ENCODE measurements at regions of chr10 and their contacts with region 1.

Region 1: DNA sequence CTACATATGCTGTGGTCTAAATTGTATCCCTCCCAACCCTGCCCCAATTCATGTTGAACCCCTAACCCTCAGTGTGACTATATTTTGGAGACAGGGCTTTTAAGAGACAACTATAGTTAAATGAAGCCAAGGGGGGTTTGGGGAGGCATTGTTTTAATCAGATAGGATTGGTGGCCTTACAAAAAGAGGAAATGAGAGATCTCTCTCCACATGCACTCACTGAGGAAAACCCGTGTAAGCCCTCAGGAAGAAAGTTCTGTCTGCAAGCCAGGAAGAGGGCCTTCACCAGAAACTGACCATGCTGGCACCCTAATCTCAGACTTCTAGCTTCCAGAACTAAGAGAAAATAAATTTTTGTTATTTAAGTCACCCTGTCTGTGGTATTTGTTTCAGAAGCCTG is 276.7 kb downstream of the KIF20B start:
- DNase-seq: no peak
- ATAC-seq: no peak
- H3K4me3 ChIP-seq: no peak overlapping the region
- H3K27ac ChIP-seq: no peak overlapping the region
- H3K4me1 ChIP-seq: no peaks in the 10 kb centered on the region
- H3K27me3 ChIP-seq: no peaks in the 10 kb centered on the region
- CTCF ChIP-seq: no peak
- EP300 ChIP-seq: no peak
- POLR2A ChIP-seq: no peak
- RAD21 ChIP-seq: no peak

Region 2: DNA sequence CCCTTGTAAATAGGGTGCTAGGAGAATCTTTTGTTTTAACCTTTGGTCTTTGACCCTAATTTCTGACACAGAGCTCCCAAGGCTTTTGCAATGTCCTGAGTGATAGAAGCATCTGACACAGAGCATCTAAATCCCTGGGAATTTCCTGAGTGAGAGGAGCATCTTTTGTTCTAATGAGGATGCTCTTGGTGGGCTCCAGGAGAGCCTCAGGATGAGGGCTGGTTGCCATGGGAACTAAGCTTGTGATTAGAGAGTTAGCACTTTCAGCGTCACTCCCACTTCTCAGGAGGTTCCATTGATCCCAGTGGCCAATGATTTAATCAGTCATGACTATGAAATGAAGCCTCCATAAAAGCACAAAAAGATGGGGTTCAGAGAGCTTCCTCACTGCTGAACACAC is 11.9 kb before region 1 on chr10:
- CTCF ChIA-PET with region 1: interaction called, 3 read pairs
- POLR2A ChIA-PET with region 1: interaction called, 4 read pairs
- RAD21 ChIA-PET with region 1: no interaction called
- SMC1A ChIA-PET with region 1: interaction called, 14 read pairs
- in situ Hi-C with region 1: no loop called
- intact Hi-C with region 1: no loop called
- DNase-seq: no peak
- ATAC-seq: no peak
- H3K4me3 ChIP-seq: no peak overlapping the region
- H3K27ac ChIP-seq: no peak overlapping the region
- H3K4me1 ChIP-seq: no peaks in the 10 kb centered on the region
- H3K27me3 ChIP-seq: no peaks in the 10 kb centered on the region; a peak in 1 of 4 replicates
- CTCF ChIP-seq: no peak
- EP300 ChIP-seq: no peak
- POLR2A ChIP-seq: no peak
- RAD21 ChIP-seq: no peak